Lower leg skin (tissue), 4 donors: ENCODE measurements at regions of chr3 and their contacts with region 1.

Region 1: DNA sequence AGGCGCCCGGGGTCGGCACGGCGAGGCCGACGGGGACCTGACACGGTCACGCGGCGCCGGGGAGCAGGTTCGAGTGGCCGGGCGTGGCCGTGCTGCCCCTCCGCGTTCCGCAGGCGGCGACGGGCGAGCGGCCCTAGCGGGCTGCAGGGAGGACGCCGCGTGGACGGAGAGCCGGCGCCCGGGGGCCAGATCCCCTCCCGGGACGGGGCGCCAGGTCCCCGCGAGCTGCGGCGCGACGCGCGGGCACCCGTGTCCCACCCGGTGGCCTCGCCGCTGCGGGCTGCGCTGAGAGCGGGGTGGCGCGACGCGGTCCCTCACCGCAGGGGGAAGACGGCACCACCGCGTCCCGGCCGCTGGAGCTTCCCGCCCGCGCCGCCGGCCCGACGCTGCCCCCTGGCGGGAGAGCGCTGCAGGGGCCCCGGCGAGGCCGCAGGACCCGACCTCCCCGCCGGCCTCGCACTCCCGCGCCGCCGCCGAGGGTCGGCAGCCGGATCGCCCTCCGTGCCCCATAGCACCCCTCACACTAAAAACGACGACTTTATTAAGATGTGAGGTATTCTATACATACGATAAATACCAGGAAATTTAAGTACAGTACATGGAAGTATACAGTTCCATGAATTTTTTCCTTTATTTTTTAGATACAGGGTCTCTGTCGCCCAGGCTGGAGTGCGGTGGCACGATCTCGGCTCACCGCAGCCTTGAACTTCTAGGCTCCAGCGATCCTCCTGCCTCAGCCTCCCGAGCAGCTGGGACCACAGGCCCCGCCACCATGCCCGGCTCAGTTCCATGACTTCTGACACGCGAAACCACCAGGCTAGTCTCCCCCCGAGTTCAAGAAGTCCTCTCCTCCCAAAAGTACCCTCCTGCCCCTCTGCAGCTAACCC is 1.3 kb upstream of the PIGZ start:
- DNase-seq: peak in 1 of 2 donors; percentile 88
- H3K4me3 ChIP-seq: peak overlapping the region; percentile 78
- CTCF ChIP-seq: no peak
- POLR2A ChIP-seq: no peak

Region 2: GRCh38 chr3:196837819-196838420 is 132.0 kb before region 1 on chr3:
- intact Hi-C with region 1: loop called (anchors 10 kb)
- DNase-seq: peak in 1 of 2 donors; percentile 29
- H3K4me3 ChIP-seq: no peak overlapping the region
- CTCF ChIP-seq: no peak
- POLR2A ChIP-seq: no peak

Region 3: GRCh38 chr3:197372047-197372666 is 402.3 kb after region 1 on chr3:
- intact Hi-C with region 1: no loop called
- DNase-seq: peak; percentile 37 to 62
- H3K4me3 ChIP-seq: no peak overlapping the region
- CTCF ChIP-seq: no peak
- POLR2A ChIP-seq: no peak